GM10248 (cell line): ENCODE measurements at regions of chr14 and their contacts with region 1.

Region 1: DNA sequence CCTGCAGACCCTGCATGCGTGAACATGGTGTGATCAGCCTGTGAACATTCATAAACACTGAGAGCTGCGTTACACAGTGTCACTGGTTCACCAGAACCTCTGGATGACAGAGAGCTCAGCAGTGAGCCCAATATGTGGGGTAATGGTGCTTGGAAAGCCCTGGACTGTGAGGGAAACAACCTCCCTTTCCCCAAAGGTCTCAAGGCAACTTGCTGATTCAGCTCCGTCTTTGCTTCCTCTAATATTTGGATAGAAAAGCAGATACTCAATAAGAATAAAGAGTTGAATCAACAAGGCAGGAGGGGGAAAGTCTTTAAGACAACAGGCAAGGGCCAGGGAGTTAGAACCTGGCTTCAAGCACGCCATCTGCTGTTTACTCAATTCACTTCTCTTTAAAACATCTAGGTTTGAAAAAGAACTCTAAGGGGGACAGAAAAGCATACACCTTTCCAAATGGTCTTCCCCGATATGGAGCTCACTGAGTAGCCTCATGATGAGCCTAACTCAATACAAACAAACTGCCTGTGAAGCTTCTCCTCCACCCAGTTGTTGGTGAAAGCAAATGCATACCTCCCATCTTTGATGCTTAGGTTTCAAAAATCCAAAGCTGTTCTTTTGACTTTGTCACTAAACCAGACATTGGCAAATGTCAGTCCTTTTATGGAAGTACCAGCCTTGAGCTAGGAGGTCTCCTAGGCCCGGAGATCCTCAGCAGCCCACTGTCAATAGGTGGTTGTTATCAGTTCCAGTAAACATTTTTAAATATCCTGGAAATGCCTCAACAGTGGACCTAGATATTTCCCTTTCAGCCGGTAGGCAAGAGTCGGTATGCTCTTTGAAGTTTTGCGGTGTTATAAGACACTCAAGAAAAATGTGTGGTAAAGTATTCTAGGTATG is 76.1 kb downstream of the SAMD4A start:
- DNase-seq: peak; percentile 24
- CTCF ChIP-seq: peak; percentile 34

Region 2: GRCh38 chr14:54450535-54450934 is 192.5 kb before region 1 on chr14:
- CTCF ChIA-PET with region 1: no interaction called
- POLR2A ChIA-PET with region 1: no interaction called
- DNase-seq: peak; percentile 55
- CTCF ChIP-seq: no peak

Region 3: GRCh38 chr14:54627540-54628363 is 15.3 kb before region 1 on chr14:
- CTCF ChIA-PET with region 1: interaction called, 36 read pairs
- POLR2A ChIA-PET with region 1: no interaction called
- DNase-seq: peak; percentile 59
- CTCF ChIP-seq: no peak